T-cell (primary cell): ENCODE measurements at regions of chr9 and their contacts with region 1.

Region 1: GRCh38 chr9:93549611-93550010 is 26.8 kb upstream of the PHF2 start:
- DNase-seq: no peak
- ATAC-seq: no peak
- H3K4me3 ChIP-seq: no peak overlapping the region
- H3K4me3 Mint-ChIP-seq: no peak overlapping the region
- H3K27ac ChIP-seq: no peak overlapping the region
- H3K27ac Mint-ChIP-seq: peak overlapping the region in 1 of 2 donors; percentile 11
- H3K4me1 ChIP-seq: no peaks in the 10 kb centered on the region
- H3K4me1 Mint-ChIP-seq: no peaks in the 10 kb centered on the region
- H3K27me3 ChIP-seq: no peaks in the 10 kb centered on the region
- H3K27me3 Mint-ChIP-seq: no peaks in the 10 kb centered on the region

Region 2: GRCh38 chr9:93525476-93525875 is 24.1 kb before region 1 on chr9:
- CTCF ChIA-PET with region 1: no interaction called
- POLR2A ChIA-PET with region 1: no interaction called
- DNase-seq: no peak
- ATAC-seq: no peak
- H3K4me3 ChIP-seq: no peak overlapping the region
- H3K4me3 Mint-ChIP-seq: no peak overlapping the region
- H3K27ac ChIP-seq: no peak overlapping the region
- H3K27ac Mint-ChIP-seq: peak overlapping the region in 1 of 2 donors; percentile 30
- H3K4me1 ChIP-seq: peaks cover 0 to 2% of the 10 kb centered on the region in 2 experiments
- H3K4me1 Mint-ChIP-seq: peaks cover 14 to 17% (median 16%) of the 10 kb centered on the region in 3 donors
- H3K27me3 ChIP-seq: no peaks in the 10 kb centered on the region
- H3K27me3 Mint-ChIP-seq: no peaks in the 10 kb centered on the region

Region 3: GRCh38 chr9:93575796-93576257 is 26.2 kb after region 1 on chr9:
- CTCF ChIA-PET with region 1: interaction called in 1 of 2 experiments, 12 read pairs
- POLR2A ChIA-PET with region 1: no interaction called
- DNase-seq: peak in 33 of 35 experiments; percentile 29 to 64 (median 50)
- ATAC-seq: peak; percentile 42 to 63 (median 48)
- H3K4me3 ChIP-seq: peak overlapping the region; percentile 58 to 86
- H3K4me3 Mint-ChIP-seq: peak overlapping the region; percentile 83 to 87 (median 87)
- H3K27ac ChIP-seq: peak overlapping the region; percentile 73
- H3K27ac Mint-ChIP-seq: peak overlapping the region; percentile 91 to 92
- H3K4me1 ChIP-seq: peaks cover 15 to 35% of the 10 kb centered on the region in 2 experiments
- H3K4me1 Mint-ChIP-seq: peaks cover 43 to 51% (median 49%) of the 10 kb centered on the region in 3 donors
- H3K27me3 ChIP-seq: no peaks in the 10 kb centered on the region
- H3K27me3 Mint-ChIP-seq: no peaks in the 10 kb centered on the region

Region 4: DNA sequence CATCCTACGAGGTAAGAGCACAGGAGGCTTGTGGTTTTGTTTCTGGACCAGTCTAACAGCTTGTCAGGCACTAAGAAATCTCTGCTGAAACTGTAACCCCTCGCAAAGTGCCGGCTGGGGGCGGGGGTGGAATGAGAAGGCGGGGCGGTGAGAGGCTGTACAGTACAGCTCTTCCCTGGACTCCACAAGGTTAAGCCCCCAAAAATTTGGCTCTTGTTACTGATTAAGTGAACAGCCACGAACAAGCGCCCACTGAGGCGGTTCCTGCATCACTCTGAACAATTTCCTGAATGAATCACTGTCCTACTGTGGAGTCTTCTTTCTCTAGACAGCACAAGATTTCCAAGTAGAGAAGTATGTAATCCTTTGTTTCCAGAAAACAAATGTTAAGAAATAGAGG is 1037.2 kb after region 1 on chr9:
- CTCF ChIA-PET with region 1: no interaction called
- POLR2A ChIA-PET with region 1: no interaction called
- DNase-seq: no peak
- ATAC-seq: no peak
- H3K4me3 ChIP-seq: no peak overlapping the region
- H3K4me3 Mint-ChIP-seq: no peak overlapping the region
- H3K27ac ChIP-seq: no peak overlapping the region
- H3K27ac Mint-ChIP-seq: no peak overlapping the region
- H3K4me1 ChIP-seq: peaks cover 7 to 12% of the 10 kb centered on the region in 2 experiments
- H3K4me1 Mint-ChIP-seq: peaks cover 14 to 27% (median 23%) of the 10 kb centered on the region in 3 donors
- H3K27me3 ChIP-seq: peaks cover 0 to 19% of the 10 kb centered on the region in 2 experiments
- H3K27me3 Mint-ChIP-seq: peaks cover 8 to 14% of the 10 kb centered on the region in 2 donors